Activated CD8-positive, alpha-beta memory T cell treated with anti-CD3 and anti-CD28 coated beads, Interleukin-2, amount 10 ng/mL, durations not matched to agents 7 days and 5 days (primary cell): ENCODE measurements at regions of chr6 and their contacts with region 1.

Region 1: DNA sequence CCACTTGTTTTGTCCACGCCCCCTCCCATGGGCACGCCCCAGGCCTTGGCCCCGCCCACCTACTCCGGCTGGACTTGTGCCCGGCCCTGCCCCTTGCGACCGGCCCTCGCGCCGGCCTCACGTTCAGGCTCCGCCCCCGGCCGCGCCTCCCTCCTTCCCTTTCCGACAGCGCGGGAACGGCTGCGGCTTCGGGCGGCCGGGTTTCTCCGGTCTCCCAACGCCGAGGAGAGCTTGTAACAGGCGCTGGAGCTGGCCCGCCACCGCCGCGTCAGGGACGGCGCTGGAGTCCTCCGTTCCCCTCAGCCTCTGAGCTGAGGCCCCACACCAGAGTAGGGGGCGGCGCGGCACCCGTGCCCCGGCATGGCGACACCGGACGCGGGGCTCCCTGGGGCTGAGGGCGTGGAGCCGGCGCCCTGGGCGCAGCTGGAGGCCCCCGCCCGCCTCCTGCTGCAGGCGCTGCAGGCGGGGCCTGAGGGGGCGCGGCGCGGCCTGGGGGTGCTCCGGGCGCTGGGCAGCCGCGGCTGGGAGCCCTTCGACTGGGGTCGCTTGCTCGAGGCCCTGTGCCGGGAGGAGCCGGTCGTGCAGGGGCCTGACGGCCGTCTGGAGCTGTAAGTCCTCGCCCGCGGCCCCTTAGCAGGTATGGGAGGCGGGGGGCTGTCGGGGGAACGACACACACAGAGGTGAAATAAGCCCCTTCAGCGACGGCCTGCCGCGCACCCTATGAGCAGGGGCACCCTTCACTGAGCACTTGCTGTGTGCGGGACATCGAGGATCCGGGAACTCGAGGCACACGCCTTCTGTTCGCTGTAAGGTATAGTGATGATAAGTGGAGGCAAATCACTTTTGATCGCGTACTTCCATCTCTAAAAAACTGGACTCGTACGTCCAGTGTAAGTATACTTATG is at the start of gene FANCE:
- DNase-seq: peak; percentile 96
- ATAC-seq: peak; percentile 88
- H3K4me3 Mint-ChIP-seq: peak within 1 kb of the TSS; percentile 76
- H3K27ac Mint-ChIP-seq: peak within 1 kb of the TSS; percentile 59
- H3K4me1 Mint-ChIP-seq: peaks cover 34% of the 10 kb centered on the region
- H3K27me3 Mint-ChIP-seq: peaks cover 10% of the 10 kb centered on the region
- total RNA-seq, gene FANCE: 15.4 to 16.0 TPM

Region 2: GRCh38 chr6:34696739-34697543 is 755.5 kb before region 1 on chr6 and contains the start of gene ILRUN:
- CTCF ChIA-PET with region 1: no interaction called
- DNase-seq: peak; percentile 97
- ATAC-seq: peak; percentile 90
- H3K4me3 Mint-ChIP-seq: peak within 1 kb of the TSS; percentile 96
- H3K27ac Mint-ChIP-seq: peak within 1 kb of the TSS; percentile 98
- H3K4me1 Mint-ChIP-seq: peaks cover 43% of the 10 kb centered on the region
- H3K27me3 Mint-ChIP-seq: peaks cover 2% of the 10 kb centered on the region
- total RNA-seq, gene ILRUN: 73.7 to 79.8 TPM

Region 3: GRCh38 chr6:35468181-35468979 is 15.9 kb after region 1 on chr6 and contains the start of gene RPL10A:
- CTCF ChIA-PET with region 1: interaction called, 71 read pairs
- DNase-seq: peak; percentile 98
- ATAC-seq: peak; percentile 87
- H3K4me3 Mint-ChIP-seq: peak within 1 kb of the TSS; percentile 99
- H3K27ac Mint-ChIP-seq: peak within 1 kb of the TSS; percentile 97
- H3K4me1 Mint-ChIP-seq: peaks cover 43% of the 10 kb centered on the region
- H3K27me3 Mint-ChIP-seq: no peaks in the 10 kb centered on the region
- total RNA-seq, gene RPL10A: 1,163 to 1,382 TPM

Region 4: GRCh38 chr6:35544523-35545313 is 92.3 kb after region 1 on chr6:
- CTCF ChIA-PET with region 1: no interaction called
- DNase-seq: no peak
- ATAC-seq: no peak
- H3K4me3 Mint-ChIP-seq: no peak overlapping the region
- H3K27ac Mint-ChIP-seq: no peak overlapping the region
- H3K4me1 Mint-ChIP-seq: peaks cover 1% of the 10 kb centered on the region
- H3K27me3 Mint-ChIP-seq: peaks cover 6% of the 10 kb centered on the region